ENCODE measurements at regions of chr5 and their contacts with region 1.

Region 1: DNA sequence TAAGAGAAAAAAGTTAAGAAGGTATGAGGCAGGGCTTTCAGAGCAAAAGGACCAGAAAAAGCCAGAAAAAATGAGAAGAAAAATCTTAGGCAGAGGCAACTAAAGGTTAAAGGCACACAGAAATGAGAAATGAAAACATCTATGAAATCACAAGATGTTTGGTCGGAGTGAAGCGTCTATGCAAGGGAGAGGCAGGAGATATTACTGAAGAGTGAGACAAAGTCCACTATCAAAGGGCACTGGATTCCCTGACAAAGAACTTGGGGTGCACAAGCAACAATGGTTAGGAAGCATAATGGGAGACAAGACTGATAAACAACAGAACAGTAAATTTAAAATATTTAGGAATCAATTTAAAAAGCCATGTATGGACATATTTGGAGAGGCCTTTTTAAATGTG is 16.9 kb downstream of the PANK3 start:
- DNase-seq: no peak
- ATAC-seq: no peak
- H3K4me3 ChIP-seq: no peak overlapping the region
- H3K27ac ChIP-seq: no peak overlapping the region
- H3K4me1 ChIP-seq: no peaks in the 10 kb centered on the region
- H3K27me3 ChIP-seq: no peaks in the 10 kb centered on the region
- CTCF ChIP-seq: no peak

Region 2: DNA sequence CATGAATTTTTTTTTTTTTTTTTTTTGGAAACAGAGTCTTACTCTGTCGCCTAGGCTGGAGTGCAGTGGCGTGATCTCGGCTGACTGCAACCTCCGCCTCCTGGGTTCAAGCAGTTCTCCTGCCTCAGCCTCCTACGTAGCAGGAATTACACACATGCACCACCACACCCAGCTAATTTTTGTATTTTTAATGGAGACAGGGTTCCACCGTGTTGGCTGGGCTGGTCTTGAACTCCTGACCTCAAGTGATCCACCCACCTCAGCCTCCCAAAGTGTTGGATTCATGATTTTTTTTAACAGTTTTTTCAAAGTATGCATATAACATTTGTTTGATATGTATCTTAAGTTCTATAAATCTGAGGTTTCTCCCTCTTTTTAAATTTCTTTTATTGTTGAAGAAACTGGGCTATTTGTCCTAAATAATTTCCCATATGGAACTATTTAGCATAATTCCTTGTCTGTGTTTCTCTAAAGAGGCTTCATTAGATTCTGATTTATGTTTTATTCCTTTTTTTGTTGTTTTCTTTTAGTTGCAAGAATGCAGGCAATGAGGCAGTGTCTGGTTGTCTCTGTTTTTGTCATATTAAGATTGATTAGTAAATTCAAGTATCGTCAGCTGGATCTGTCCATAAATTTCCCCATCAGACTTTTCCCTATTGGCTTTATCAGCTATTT is 59.6 kb before region 1 on chr5:
- CTCF ChIA-PET with region 1: no interaction called
- POLR2A ChIA-PET with region 1: no interaction called
- intact Hi-C with region 1: loop called (anchors 10 kb)
- DNase-seq: no peak
- ATAC-seq: no peak
- H3K4me3 ChIP-seq: no peak overlapping the region
- H3K27ac ChIP-seq: no peak overlapping the region
- H3K4me1 ChIP-seq: no peaks in the 10 kb centered on the region
- H3K27me3 ChIP-seq: no peaks in the 10 kb centered on the region
- CTCF ChIP-seq: no peak

Measured in PC-3 (cell line).